ENCODE measurements at regions of chr10 and their contacts with region 1.

Region 1: DNA sequence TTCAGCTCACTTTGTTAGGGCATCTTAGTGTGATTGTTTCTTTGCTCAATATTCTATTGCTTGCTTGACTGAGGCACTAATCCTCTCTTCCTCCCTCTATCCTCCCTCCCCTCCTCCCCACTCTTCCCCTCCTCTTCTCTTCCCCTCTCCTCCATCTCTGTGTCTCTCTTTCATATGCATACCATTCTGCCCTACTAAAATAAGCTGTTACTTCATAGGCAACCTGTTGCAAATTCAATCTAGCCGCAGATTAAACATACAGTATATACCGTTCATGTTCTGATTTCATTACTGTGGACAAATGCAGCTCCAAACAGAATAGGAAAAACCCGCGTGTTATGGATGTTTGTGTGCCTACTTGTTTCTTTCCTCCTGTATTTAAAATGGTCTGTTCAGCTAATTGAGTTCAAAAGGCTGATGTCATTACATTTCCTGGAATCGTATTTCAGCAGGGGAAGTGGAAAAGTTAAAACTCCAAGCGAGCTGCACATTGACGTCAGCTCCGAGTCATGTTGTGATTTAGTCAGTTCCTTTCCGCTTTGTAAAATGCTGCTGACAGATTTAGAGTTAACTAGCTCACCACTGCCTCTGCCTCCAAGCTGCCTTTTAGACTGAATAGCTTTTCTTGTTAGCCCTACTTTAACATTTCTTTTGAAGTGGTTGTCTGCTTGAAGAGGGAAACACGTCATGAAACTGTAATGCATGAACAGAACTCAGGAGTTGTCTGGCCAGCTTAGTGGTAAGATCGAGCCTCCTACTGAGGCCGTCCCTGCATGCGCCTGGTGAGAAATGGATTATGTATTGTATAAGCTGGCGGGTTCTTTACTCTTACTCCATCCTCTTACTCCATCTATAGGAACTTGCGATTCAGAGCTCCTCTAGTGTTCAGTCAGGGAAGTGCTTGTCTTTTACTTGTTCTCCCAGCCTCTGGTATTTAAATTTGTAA is 69.0 kb downstream of the CREM start:
- DNase-seq: peak; percentile 70 to 95
- ATAC-seq: peak; percentile 96 to 98
- H3K4me3 ChIP-seq: peak overlapping the region; percentile 50
- H3K27ac ChIP-seq: peak overlapping the region; percentile 82 to 87
- H3K4me1 ChIP-seq: peaks cover 10% of the 10 kb centered on the region
- CTCF ChIP-seq: peak; percentile 75
- EP300 ChIP-seq: peak in 1 of 2 experiments; percentile 61; a peak in 1 of 5 replicates
- POLR2A ChIP-seq: no peak
- RAD21 ChIP-seq: peak; percentile 55 to 58; a peak in 4 of 5 replicates

Region 2: DNA sequence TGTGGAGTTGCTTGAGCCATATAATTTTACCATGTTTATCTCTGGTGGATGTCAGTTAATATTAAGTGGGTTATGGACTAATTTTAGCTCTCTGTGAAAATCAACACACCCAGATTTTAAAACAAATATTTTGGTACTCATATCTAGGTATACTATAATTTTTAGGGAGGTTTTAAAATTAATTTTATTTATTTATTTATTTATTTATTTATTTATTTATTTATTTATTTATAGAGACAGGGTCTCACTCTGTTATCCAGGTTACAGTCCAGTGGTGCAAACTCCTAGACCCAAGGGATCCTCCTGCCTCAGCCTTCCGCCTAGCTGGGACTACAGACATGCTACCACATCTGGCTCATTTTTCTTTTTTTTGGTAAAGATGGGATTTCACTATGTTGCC is 76.3 kb before region 1 on chr10:
- CTCF ChIA-PET with region 1: interaction called, 20 read pairs
- POLR2A ChIA-PET with region 1: interaction called, 3 read pairs
- DNase-seq: no peak
- ATAC-seq: no peak
- H3K4me3 ChIP-seq: no peak overlapping the region
- H3K27ac ChIP-seq: no peak overlapping the region
- H3K4me1 ChIP-seq: no peaks in the 10 kb centered on the region
- CTCF ChIP-seq: no peak
- EP300 ChIP-seq: no peak
- POLR2A ChIP-seq: no peak
- RAD21 ChIP-seq: no peak

Region 3: DNA sequence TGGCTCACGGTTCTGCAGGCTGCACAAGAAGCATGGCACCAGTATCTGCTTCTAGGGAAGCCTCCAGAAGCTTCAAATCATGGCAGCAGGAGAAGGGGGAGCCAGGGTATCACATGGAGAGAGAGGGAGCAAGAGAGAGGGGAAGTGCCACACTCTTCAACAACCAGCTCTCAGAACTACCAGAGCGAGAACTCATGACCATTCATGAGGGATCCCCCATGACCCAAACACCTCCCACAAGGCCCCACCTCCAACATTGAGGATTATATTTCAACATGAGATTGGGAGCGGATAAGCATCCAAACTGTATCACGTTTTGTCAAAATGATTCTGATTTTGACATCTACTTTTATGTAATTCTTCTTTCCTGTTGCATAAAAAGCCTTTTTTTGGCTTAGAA is 30.5 kb before region 1 on chr10:
- CTCF ChIA-PET with region 1: interaction called, 12 read pairs
- POLR2A ChIA-PET with region 1: no interaction called
- DNase-seq: no peak
- ATAC-seq: no peak
- H3K4me3 ChIP-seq: no peak overlapping the region
- H3K27ac ChIP-seq: no peak overlapping the region
- H3K4me1 ChIP-seq: no peaks in the 10 kb centered on the region
- CTCF ChIP-seq: no peak
- EP300 ChIP-seq: no peak
- POLR2A ChIP-seq: no peak
- RAD21 ChIP-seq: no peak

Region 4: GRCh38 chr10:35184527-35185171 is 11.0 kb before region 1 on chr10:
- CTCF ChIA-PET with region 1: interaction called, 21 read pairs
- POLR2A ChIA-PET with region 1: no interaction called
- DNase-seq: no peak
- ATAC-seq: no peak
- H3K4me3 ChIP-seq: no peak overlapping the region
- H3K27ac ChIP-seq: no peak overlapping the region
- H3K4me1 ChIP-seq: no peaks in the 10 kb centered on the region
- CTCF ChIP-seq: no peak
- EP300 ChIP-seq: no peak
- POLR2A ChIP-seq: no peak
- RAD21 ChIP-seq: no peak

Region 5: GRCh38 chr10:35218339-35218955 is 22.8 kb after region 1 on chr10:
- CTCF ChIA-PET with region 1: interaction called, 31 read pairs
- POLR2A ChIA-PET with region 1: no interaction called
- DNase-seq: peak; percentile 66 to 92
- ATAC-seq: peak; percentile 80 to 87
- H3K4me3 ChIP-seq: no peak overlapping the region
- H3K27ac ChIP-seq: peak overlapping the region in 1 of 2 experiments; percentile 30; a peak in 2 of 6 replicates
- H3K4me1 ChIP-seq: peaks cover 14% of the 10 kb centered on the region; the same call in 2 of the 3 replicates
- CTCF ChIP-seq: peak; percentile 95
- EP300 ChIP-seq: no peak
- POLR2A ChIP-seq: no peak
- RAD21 ChIP-seq: peak; percentile 81 to 83